ENCODE measurements at regions of chr3 and their contacts with region 1.

Region 1: DNA sequence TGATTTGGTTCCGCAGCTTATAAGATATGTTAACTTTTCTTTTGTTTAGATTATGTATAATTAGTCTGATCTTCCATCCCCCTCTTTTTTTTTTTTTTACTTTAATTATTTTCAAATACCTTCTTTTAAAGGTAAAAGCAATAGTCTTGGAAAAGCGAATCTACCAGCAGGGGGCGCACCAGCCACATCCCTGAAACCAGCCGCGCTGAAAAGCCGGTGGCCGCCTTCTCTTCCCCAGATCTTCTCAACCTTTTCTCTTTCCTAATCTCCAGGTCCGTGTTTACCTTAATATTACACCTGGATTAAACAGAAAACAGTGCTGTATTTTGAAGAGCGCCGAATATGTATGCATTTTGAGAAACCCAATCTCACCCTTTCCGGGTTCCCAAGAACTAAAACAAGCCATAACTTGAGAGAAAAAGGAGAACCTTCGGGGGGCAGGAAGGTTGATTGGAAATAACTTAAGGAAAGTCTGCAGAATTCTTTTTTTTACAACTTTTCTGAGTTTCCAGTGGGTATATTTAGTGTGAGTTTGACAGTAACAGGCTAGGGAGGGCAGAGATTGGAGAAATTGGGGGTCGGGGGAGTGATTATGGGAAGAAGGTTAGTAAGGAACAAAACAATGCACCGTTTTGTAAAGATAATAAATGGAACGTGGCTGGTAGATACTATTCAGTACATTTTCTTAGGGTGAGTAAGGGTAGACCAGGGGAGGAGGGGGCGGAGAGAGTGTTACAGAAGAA is 2.0 kb upstream of the SOX2 start:
- DNase-seq: peak; percentile 89
- ATAC-seq: peak; percentile 48

Region 2: GRCh38 chr3:182258538-182259177 is 549.0 kb after region 1 on chr3:
- intact Hi-C with region 1: loop called (anchors 10 kb)
- DNase-seq: no peak
- ATAC-seq: peak; percentile 79

Region 3: GRCh38 chr3:182692021-182692420 is 982.3 kb after region 1 on chr3:
- intact Hi-C with region 1: loop called (anchors 5 kb)
- DNase-seq: no peak
- ATAC-seq: no peak